ENCODE measurements at regions of chr3 and their contacts with region 1.

Region 1: DNA sequence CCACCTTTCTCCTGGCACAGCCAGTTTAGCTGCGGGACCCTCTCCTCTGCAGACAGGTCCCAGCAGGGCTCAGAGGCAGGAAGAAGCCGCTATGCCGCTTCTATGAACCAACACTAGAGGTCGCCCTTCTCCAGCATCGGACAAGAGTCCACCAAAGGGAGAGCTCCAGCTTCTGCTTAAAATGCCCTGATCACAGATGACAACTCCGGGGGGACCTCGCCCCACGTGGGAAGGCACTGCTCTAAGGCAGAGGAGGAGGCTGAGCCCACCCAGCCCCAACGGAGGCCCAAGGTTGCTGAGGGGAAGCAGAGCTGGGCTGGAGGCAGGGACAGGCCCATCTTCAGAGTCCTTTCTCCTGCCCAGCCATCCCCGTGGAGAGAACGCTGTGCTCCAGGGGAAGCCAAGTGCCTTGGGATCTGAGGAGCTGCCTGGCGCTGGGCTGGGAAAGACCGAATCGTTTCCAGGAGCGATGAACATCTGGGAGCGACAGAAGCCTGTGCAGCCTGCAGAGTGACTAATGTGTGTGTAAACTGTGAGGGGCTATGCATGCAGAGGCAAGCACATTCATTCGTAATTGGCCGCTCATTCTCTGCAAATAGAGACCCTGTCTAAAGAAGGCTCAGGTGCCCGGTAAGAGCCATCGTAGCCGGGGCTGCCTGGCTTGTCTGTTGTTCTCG is 43.5 kb upstream of the BDH1 start:
- DNase-seq: peak; percentile 88
- H3K4me3 ChIP-seq: no peak overlapping the region
- H3K27ac ChIP-seq: no peak overlapping the region
- H3K4me1 ChIP-seq: peaks cover 6% of the 10 kb centered on the region
- CTCF ChIP-seq: peak; percentile 92

Region 2: DNA sequence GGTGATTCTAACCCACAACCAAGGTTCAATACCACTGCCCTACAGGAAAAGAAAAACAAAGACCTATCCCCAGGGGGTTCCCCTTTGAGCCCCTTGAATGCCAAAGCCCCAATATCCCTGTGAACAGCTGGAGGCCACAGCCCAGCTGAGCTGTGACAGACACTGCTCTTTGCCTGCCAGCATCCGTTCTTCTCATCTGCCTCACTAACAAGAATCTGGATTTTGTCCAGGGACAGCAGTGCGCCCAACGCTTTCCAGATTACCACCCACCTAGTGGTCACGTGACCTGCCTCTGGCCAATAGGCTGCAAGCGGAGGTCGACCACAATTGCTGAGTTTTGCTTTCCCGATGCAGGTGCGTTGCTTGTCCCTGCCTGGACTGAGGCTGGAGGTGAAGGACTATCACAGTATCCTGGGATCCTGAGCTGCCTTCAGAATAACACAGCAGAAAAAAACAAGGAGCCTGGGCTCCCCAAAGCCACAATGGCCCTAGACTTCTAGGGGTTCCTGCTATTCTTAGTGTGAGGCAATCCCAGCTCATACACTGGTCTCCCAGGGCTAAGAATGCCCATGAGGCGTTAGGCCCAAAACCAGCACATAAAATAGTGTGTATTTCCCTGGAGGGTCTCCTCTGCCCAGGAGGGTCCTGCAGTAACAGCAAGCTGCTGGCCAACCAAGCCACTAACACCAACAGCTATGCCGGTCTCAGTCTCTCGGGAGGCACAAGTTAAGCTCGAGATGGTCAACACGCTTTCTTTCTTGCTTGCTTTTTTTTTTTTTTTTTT is 57.3 kb before region 1 on chr3:
- CTCF ChIA-PET with region 1: no interaction called
- POLR2A ChIA-PET with region 1: no interaction called
- intact Hi-C with region 1: no loop called
- DNase-seq: no peak
- H3K4me3 ChIP-seq: no peak overlapping the region
- H3K27ac ChIP-seq: no peak overlapping the region
- H3K4me1 ChIP-seq: no peaks in the 10 kb centered on the region
- CTCF ChIP-seq: no peak

Region 3: DNA sequence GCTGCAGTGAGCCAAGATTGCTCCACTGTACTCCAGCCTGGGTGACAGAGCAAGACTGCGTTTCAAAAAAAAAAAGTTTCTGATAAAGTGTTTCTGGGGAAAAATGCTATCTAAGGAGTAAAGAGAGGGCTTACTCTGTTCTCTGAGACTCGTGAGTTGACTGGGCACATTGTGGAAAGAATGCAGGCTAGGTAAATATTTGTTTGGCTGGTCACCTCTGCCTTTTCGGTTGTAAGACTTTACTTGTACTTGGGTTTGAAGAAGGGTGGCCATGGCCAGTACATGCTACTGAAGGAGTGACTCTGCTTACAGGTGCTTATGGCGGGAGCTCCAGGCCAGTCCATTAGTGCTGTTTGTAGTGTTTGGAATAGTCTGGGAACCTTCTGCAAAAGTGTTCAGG is 68.8 kb after region 1 on chr3:
- CTCF ChIA-PET with region 1: no interaction called
- POLR2A ChIA-PET with region 1: no interaction called
- intact Hi-C with region 1: loop called (anchors 2 kb)
- DNase-seq: no peak
- H3K4me3 ChIP-seq: no peak overlapping the region
- H3K27ac ChIP-seq: no peak overlapping the region
- H3K4me1 ChIP-seq: peaks cover 8% of the 10 kb centered on the region
- CTCF ChIP-seq: no peak

Region 4: DNA sequence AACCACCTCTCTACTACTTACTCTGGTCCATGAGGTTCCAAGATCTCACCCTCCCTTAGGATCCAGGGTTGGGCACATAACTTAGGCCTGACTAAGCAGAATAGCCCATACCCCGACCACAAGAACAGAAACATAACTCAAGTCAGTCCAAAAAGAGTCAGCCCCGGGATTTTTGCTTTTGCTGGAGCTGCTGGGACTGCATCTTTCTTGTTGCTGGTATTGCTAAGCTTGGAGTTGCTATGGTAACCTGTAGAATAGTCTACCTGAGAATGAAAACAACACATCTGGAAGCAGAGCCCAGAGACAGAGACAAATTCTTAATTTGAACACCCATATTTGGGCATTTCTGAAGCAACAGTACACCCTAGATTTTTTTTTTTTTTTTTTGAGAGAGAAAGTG is 131.0 kb after region 1 on chr3:
- CTCF ChIA-PET with region 1: no interaction called
- POLR2A ChIA-PET with region 1: no interaction called
- intact Hi-C with region 1: no loop called
- DNase-seq: no peak
- H3K4me3 ChIP-seq: no peak overlapping the region
- H3K27ac ChIP-seq: no peak overlapping the region
- H3K4me1 ChIP-seq: peaks cover 46% of the 10 kb centered on the region
- CTCF ChIP-seq: no peak

Region 5: GRCh38 chr3:197801891-197802778 is 202.9 kb after region 1 on chr3:
- CTCF ChIA-PET with region 1: no interaction called
- POLR2A ChIA-PET with region 1: interaction called, 4 read pairs
- intact Hi-C with region 1: loop called (anchors 1 kb)
- DNase-seq: peak; percentile 57
- H3K4me3 ChIP-seq: no peak overlapping the region
- H3K27ac ChIP-seq: no peak overlapping the region
- H3K4me1 ChIP-seq: peaks cover 22% of the 10 kb centered on the region
- CTCF ChIP-seq: peak; percentile 82

Region 6: DNA sequence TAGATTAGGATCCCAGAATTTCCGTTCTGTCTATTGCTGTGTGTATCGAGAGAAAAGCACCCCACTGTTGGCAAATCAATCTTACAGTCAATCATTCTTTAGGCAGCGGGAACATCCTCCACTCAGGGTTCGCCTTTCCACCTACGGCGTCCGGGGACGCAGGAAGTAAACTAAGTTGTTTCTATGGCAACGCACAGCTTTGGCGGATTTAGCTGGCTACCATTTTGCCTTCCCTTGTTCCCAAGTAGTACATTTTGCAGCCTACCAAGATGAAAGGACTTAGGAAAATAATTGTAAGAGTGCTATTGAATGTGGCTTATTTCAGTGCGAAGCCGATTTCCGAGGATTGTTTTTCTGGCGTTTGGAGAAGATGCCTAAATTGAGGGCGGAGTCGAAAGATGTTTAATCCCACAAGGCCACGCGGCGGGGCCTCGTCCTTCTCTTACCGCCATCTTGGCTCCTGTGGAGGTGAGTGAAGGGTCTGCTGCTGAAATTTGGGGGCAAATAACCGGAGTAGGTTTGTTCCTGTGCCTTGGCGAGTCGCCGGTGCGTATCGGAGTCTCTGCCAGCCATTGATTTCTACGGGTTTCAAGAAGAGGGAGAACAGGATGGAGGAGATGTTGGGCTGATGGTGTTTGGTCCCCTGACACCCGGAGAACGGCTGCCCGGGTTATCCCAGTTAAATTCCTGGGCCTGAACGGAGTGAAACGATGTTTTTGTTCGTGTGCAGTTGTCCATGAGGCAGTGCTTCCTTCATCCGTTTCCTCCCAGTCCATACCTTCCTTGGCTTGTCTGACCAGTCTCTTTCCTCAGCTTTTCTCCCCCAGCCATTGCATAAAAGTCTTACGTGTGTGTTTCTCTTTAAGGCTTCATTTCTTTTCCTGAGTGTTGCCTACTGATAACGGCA is 350.8 kb after region 1 on chr3 and contains the start of gene RPL35A:
- CTCF ChIA-PET with region 1: no interaction called
- POLR2A ChIA-PET with region 1: no interaction called
- intact Hi-C with region 1: loop called (anchors 2 kb)
- DNase-seq: peak; percentile 96
- H3K4me3 ChIP-seq: peak within 1 kb of the TSS; percentile 84
- H3K27ac ChIP-seq: peak within 1 kb of the TSS; percentile 57
- H3K4me1 ChIP-seq: peaks cover 39% of the 10 kb centered on the region
- CTCF ChIP-seq: no peak
- total RNA-seq, gene RPL35A: 846 and 968 TPM in 2 replicates

Measured in OCI-LY7 (cell line).